Gastrocnemius medialis (tissue), 4 donors: ENCODE measurements at regions of chrX and their contacts with region 1.

Region 1: GRCh38 chrX:38458071-38458470 is 103.3 kb upstream of the TSPAN7 start:
- DNase-seq: no peak
- ATAC-seq: peak; percentile 46 to 80
- H3K4me3 ChIP-seq: no peak overlapping the region
- H3K27ac ChIP-seq: no peak overlapping the region
- H3K4me1 ChIP-seq: no peaks in the 10 kb centered on the region
- H3K27me3 ChIP-seq: no peaks in the 10 kb centered on the region
- CTCF ChIP-seq: peak in 4 of 5 experiments; percentile 3 to 45 (median 29)
- POLR2A ChIP-seq: no peak

Region 2: GRCh38 chrX:38357747-38358673 is 100.1 kb before region 1 on chrX:
- in situ Hi-C with region 1: no loop called
- intact Hi-C with region 1: no loop called
- DNase-seq: no peak
- ATAC-seq: no peak
- H3K4me3 ChIP-seq: no peak overlapping the region
- H3K27ac ChIP-seq: peak overlapping the region in 3 of 4 donors; percentile 30 to 57 (median 34)
- H3K4me1 ChIP-seq: no peaks in the 10 kb centered on the region
- H3K27me3 ChIP-seq: no peaks in the 10 kb centered on the region
- CTCF ChIP-seq: no peak
- POLR2A ChIP-seq: no peak

Region 3: GRCh38 chrX:38654302-38654701 is 196.2 kb after region 1 on chrX:
- in situ Hi-C with region 1: loop called in 2 of 4 experiments (anchors 10 to 25 kb)
- intact Hi-C with region 1: loop called (anchors 2 kb)
- DNase-seq: no peak
- ATAC-seq: no peak
- H3K4me3 ChIP-seq: no peak overlapping the region
- H3K27ac ChIP-seq: peak overlapping the region; percentile 47 to 84 (median 64)
- H3K4me1 ChIP-seq: peaks cover 28% of the 10 kb centered on the region in 2 donors
- H3K27me3 ChIP-seq: no peaks in the 10 kb centered on the region
- CTCF ChIP-seq: peak; percentile 38 to 57 (median 45)
- POLR2A ChIP-seq: no peak

Region 4: GRCh38 chrX:38664285-38664684 is 206.2 kb after region 1 on chrX:
- in situ Hi-C with region 1: loop called in 2 of 4 experiments (anchors 10 to 25 kb)
- intact Hi-C with region 1: no loop called
- DNase-seq: no peak
- ATAC-seq: peak; percentile 61
- H3K4me3 ChIP-seq: no peak overlapping the region
- H3K27ac ChIP-seq: no peak overlapping the region
- H3K4me1 ChIP-seq: peaks cover 7 to 10% of the 10 kb centered on the region in 2 donors
- H3K27me3 ChIP-seq: no peaks in the 10 kb centered on the region
- CTCF ChIP-seq: peak in 3 of 5 experiments; percentile 17 to 41 (median 31)
- POLR2A ChIP-seq: no peak